ENCODE measurements at regions of chr3 and their contacts with region 1.

Region 1: DNA sequence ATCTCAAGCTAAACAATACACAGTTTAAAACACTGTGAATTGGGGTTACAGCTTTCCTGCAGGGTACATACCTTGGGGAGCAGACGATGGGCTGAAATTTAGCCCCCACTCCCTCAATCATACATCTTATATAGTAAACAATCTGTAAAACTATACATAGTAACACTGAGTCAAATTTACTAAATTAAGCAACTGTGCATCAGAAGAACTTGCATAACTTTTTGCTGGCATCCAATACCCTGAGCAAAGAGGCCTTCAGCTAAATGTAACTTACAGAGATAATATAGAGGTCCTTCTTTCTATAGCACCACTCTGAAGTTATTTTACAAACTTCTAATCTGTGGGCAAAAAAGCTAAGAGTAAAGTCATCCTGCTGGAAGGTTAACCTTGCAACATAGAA is 603.6 kb upstream of the TGFBR2 start:
- H3K4me3 ChIP-seq: no peak overlapping the region
- H3K27ac ChIP-seq: no peak overlapping the region
- H3K4me1 ChIP-seq: no peaks in the 10 kb centered on the region
- CTCF ChIP-seq: no peak

Region 2: DNA sequence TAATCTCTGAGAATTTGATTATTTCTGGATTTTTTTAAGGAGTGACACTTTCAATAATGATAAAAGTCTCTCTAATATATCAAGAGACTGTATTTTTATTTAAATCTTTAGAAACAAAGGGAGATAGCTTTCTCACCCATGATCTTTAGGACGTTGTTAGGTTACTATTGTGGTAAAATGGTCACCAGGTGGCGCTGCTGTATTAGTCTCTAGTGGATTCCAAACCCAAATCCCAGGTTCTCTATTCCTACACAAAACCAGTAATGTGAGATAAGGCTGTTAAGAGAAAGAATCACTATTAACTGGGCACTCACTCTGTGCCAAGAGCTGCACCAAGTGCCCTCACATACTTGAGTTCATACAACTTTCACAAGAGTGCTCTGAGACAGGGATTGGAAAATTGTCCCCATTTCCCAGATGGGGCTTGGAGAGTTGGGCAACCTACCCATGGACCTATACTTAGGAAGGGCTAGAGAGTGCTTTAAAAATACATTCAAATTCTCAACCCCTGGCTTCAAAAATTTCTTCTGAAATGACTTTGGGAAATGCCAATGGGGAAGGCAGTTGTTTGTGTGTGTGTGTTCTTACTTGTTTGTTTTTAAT is 10.2 kb after region 1 on chr3:
- CTCF ChIA-PET with region 1: interaction called, 13 read pairs
- POLR2A ChIA-PET with region 1: interaction called, 4 read pairs
- H3K4me3 ChIP-seq: no peak overlapping the region
- H3K27ac ChIP-seq: no peak overlapping the region
- H3K4me1 ChIP-seq: no peaks in the 10 kb centered on the region
- CTCF ChIP-seq: no peak

Region 3: DNA sequence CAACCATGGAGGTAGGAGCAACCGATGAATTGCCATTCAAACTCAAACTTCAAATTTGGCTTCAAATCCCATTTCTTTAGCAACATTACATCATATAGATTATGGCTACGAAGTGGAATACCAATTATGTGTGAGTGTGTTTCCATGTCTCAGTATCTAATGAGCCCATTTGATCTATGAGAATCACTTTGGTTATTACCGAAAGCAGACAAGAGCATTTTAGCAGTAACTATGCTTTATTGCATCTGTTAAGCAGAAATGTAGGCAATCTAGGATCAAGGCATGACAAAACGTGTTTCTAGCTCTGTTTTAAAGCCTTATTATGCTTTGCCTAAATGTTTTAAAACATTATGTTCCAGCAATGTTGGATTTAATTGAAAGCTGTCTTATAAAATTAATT is 21.7 kb after region 1 on chr3:
- CTCF ChIA-PET with region 1: no interaction called
- POLR2A ChIA-PET with region 1: no interaction called
- H3K4me3 ChIP-seq: no peak overlapping the region
- H3K27ac ChIP-seq: no peak overlapping the region
- H3K4me1 ChIP-seq: no peaks in the 10 kb centered on the region
- CTCF ChIP-seq: no peak